Heart left ventricle (tissue), 16 donors: ENCODE measurements at regions of chr17 and their contacts with region 1.

Region 1: DNA sequence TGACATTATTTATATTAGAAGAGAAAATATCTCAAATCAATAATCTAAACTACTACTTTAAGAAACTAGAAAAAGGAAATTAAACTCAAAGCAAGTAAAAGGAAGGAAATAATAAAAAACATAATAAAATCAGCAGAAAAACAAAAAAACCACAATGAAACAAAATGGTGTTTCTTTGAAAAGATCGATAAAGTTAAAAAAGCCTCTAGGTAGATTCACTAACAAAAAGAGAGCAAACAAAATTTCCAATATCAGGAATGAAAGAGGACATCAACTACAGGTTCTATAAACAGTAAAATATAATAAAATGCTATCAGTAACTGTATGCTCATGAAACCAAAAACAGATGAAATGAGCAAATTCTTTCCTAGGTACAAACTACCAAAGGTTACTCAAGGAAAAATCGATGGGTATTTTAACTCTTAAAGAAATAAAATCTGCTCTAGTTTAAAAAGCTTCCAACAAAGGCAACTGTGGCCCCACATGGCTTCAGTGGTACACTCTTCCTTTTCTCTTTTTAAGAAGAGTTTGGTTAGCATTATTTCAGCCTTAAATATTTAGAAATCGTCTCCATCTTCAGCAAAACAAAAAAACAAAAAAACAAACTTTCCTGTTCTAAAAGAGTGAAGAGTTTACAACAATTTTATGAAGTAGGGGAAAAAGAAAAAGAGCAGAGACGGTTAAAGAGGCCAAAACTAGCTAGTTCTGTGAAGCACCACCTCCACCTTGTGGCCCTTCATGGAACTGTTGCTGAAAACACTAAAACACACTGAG is 102.2 kb downstream of the TRIM37 start:
- DNase-seq: peak in 4 of 5 donors; percentile 39 to 48 (median 46)
- ATAC-seq: peak in 3 of 4 donors; percentile 70 to 76 (median 72)
- H3K4me3 ChIP-seq: no peak overlapping the region
- H3K27ac ChIP-seq: peak overlapping the region in 1 of 12 donors; percentile 6
- H3K4me1 ChIP-seq: peaks cover 0 to 31% (median 5%) of the 10 kb centered on the region in 12 donors
- H3K27me3 ChIP-seq: no peaks in the 10 kb centered on the region
- CTCF ChIP-seq: peak; percentile 90 to 98 (median 96)
- POLR2A ChIP-seq: no peak

Region 2: DNA sequence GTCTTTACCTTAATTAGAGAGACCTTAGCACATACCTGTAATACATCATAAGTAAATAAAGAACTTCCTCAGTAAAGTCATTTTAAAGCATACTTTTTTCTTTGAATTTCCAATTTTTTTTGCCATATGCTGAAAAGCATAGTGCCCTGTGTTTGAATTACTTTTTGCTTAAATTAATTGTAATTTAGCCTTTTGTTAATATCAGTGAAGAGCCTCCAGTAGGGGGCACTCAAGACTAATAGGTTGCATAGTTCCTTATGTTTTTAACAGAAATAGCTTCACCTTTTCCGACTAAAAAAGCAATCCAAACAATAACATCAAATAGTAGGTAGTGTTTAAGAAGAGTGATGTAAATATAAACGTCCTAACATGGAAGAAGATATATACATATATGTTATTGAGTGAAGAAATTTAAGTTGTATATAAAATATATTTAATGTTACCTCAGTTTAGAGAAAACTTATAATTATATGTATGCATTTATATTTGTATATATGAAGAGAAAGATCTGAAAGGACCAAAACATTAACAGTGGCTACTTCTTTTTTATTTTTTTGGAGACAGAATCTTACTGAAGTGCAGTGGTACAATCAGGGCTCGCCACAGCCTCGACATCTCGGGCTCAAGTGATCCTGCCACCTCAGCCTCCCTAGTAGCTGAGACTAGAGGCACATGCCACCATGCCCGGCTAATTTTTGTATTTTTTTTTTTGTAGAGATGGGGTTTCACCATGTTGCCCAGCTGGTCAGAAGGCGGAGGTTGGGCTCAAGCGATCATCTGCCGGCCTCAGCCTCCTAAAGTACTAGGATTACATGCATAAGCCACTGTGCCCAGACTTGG is 293.4 kb before region 1 on chr17:
- intact Hi-C with region 1: loop called (anchors 2 to 5 kb)
- DNase-seq: peak in 1 of 5 donors; percentile 12
- ATAC-seq: no peak
- H3K4me3 ChIP-seq: no peak overlapping the region
- H3K27ac ChIP-seq: no peak overlapping the region
- H3K4me1 ChIP-seq: no peaks in the 10 kb centered on the region
- H3K27me3 ChIP-seq: no peaks in the 10 kb centered on the region
- CTCF ChIP-seq: peak; percentile 50 to 83 (median 72)
- POLR2A ChIP-seq: no peak

Region 3: DNA sequence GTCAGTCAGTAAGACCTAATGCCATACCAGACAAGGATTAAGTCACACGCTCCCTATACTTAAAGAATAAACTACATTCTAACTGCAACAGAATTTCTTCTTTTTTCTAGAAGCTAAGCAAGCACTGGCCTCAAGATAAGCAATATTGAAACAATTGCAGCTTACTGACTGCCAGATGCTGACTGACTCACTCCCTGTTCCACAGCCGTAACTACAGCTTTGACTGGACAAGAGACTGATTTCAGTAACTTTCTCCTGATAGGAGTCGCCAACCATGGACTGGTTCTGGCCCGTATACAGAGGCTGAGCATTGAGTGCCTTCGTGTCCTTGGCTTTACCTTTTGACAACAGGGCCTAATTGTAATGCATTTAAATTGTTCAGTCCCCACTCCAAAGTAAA is 34.2 kb after region 1 on chr17:
- intact Hi-C with region 1: no loop called
- DNase-seq: no peak
- ATAC-seq: peak; percentile 58 to 85 (median 72)
- H3K4me3 ChIP-seq: no peak overlapping the region
- H3K27ac ChIP-seq: no peak overlapping the region
- H3K4me1 ChIP-seq: peaks cover 0 to 9% (median 0%) of the 10 kb centered on the region in 12 donors
- H3K27me3 ChIP-seq: no peaks in the 10 kb centered on the region
- CTCF ChIP-seq: no peak
- POLR2A ChIP-seq: no peak